Dorsolateral prefrontal cortex (tissue), 120 donors: ENCODE measurements at regions of chr7 and their contacts with region 1.

Region 1: GRCh38 chr7:7681179-7681935 is 37.0 kb downstream of the RPA3 start:
- DNase-seq: peak in 2 of 10 donors; percentile 45 to 51
- H3K4me3 ChIP-seq: peak overlapping the region in 52 of 59 donors; percentile 6 to 59 (median 34)
- H3K27ac ChIP-seq: peak overlapping the region in 58 of 59 donors; percentile 30 to 88 (median 74)
- H3K27me3 ChIP-seq: no peaks in the 10 kb centered on the region
- CTCF ChIP-seq: peak; percentile 48 to 92 (median 80)

Region 2: DNA sequence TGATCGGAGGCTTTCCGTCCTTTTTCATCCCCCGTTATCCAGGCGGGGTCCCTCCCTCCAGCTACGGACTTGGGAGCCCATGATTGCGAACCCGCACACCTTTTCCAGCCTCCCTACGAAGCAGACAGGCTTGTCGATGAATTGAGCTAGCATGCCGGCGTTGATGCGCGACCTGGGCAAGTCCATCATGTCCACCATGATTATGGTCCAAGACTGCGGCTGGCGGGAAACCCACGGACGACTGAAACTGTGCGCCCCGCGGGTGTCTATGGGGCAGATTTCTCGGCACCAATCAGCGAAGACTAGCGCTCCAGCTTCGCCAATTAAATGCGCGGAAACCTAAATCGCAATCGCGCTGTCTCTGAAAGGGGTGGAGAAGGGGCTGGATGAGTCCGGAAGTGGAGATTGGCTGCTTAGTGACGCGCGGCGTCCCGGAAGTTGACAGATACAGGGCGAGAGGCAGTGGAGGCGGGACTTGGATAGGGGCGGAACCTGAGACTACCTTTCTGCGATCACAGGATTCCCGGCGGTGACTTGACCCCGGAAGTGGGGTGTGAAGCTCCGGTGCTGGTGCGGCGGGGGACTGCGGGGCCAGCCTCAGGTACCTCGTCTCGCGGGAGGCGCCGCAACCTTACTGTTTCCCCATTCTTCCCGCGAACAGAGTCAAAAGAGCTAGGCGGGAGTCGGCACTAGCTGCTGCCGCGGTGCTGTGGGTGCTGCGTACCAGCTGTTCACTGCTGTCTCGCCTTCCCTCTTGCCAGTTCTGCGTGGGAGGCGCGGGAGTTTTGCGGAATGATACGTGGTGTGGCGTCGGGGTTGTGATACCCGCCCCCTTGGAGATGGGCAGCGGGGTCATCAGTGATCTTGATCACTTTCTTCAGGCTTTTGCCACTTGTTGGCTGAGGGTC is 40.9 kb before region 1 on chr7 and contains the start of gene UMAD1:
- intact Hi-C with region 1: loop called in 1 of 2 experiments (anchors 2 kb)
- DNase-seq: peak; percentile 98 to 100 (median 99)
- H3K4me3 ChIP-seq: peak within 1 kb of the TSS; percentile 68 to 99 (median 89)
- H3K27ac ChIP-seq: peak within 1 kb of the TSS in 58 of 59 donors; percentile 52 to 94 (median 84)
- H3K27me3 ChIP-seq: no peaks in the 10 kb centered on the region
- CTCF ChIP-seq: peak in 19 of 56 donors; percentile 7 to 44 (median 26)
- total RNA-seq, gene UMAD1: 12.6 to 25.1 (median 18.8) TPM

Region 3: DNA sequence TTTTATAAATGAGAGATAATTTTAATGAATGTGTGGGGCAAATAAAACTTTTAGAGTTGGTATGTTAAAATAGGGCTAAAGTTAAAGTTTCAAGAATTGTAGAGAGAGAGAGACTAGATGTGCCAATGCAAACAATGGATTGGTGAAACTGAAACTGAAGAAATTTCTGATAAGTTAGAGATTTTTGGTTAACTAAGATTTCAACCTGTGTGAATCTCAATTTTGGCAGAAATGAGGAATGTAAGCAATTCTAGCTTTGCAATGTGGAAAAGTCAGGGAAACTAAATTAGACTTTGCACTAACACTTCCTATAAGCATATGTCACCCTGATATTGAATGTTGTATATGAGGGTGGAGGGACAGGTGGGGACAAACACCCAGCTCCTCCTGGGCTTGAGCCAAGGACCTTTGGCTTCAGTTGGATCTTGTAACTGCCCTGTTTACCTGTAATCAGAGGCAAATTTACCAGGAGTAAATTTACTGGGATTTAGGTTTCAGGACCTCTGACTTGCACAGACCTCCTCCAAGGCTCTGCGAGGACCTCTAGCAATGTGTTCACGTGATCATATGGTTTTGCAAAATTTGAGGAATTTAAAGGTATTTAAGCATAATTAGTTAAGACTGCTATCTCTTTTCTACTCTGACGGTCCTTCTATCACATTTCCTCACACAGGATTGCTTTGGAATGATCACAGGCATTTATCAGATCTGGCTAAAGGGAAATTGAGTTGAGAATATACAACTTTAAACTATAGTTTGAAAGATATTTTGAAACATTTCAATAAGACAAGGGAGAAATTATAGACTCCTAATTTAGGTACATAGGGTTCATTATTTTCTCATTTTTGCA is 70.1 kb after region 1 on chr7:
- intact Hi-C with region 1: loop called in 1 of 2 experiments (anchors 10 kb)
- DNase-seq: no peak
- H3K4me3 ChIP-seq: no peak overlapping the region
- H3K27ac ChIP-seq: no peak overlapping the region
- H3K27me3 ChIP-seq: no peaks in the 10 kb centered on the region
- CTCF ChIP-seq: no peak

Region 4: DNA sequence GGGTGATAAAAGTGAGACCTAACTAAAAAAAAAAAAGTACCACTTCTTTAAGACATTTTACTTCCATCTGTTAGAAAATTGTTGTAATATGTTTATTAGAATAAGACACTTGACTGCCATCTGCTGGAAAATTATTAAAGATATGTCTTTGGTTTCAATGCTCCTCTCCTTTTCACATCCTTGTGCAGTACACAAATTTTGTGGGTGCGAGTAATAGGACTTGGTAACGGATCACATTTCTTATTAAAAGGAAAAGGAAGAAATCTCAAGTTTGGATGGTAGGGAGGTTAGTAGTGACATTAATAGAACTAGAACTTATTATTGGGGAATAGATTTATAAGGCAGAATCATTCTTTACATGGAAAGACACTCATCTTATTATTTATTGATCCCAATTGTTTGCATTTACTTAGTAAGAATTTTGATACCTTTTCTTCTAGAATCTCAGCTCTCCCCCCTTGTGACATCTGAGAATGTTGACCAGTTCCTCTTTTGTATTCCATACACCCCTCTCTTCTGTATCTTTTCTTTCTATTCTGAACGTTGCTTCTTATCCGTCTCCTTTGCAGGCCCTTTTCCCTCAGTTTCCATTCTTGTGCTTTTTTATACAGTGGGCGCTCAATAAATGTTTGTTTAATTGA is 80.1 kb after region 1 on chr7:
- intact Hi-C with region 1: loop called (anchors 5 to 10 kb)
- DNase-seq: no peak
- H3K4me3 ChIP-seq: peak overlapping the region in 50 of 59 donors; percentile 0 to 57 (median 32)
- H3K27ac ChIP-seq: peak overlapping the region in 12 of 59 donors; percentile 2 to 72 (median 52)
- H3K27me3 ChIP-seq: no peaks in the 10 kb centered on the region
- CTCF ChIP-seq: peak in 55 of 56 donors; percentile 22 to 69 (median 48)

Region 5: DNA sequence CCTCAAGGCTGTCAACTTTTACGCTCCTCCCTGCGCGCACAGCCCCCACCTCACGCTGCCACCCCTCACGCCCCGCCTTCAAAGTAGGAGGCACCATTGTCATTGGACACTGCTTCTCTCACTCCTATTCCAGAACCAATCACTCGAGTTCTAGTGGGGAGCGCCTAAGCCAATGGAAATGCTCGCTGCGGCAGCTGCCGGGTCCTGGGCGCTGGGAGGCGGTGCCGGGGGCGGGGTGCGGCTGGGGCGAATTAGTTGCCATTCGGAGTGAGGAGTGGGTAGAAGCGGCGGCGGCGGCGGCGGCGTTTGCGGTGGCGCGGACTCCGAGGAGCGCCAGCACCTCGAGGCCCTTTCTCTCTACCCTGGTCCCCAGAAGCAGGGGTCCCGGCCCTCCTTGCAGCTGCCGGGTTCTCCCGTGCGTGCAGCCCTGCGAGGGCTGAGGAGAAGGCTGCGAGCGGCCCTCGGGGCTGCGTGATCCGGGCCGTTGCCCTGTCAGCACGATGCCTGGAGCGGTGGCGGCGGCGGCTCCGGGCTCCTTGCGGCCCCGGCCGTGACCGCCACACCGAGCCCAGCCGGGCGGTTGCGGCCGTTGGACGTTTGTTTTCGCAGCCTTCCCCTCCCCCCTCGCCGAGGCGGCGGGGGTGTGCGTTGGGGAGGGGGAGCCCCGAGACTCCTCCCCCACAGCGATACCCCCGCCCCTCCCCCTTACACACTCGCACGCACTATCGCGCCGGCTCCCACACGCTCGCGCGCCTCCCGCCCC is 287.4 kb after region 1 on chr7 and contains the start of gene GLCCI1:
- intact Hi-C with region 1: loop called in 1 of 2 experiments (anchors 5 kb)
- DNase-seq: peak; percentile 94 to 99 (median 98)
- H3K4me3 ChIP-seq: peak within 1 kb of the TSS; percentile 77 to 100 (median 96)
- H3K27ac ChIP-seq: peak within 1 kb of the TSS; percentile 90 to 100 (median 100)
- H3K27me3 ChIP-seq: no peaks in the 10 kb centered on the region
- CTCF ChIP-seq: peak in 14 of 56 donors; percentile 9 to 41 (median 19)
- total RNA-seq, gene GLCCI1: 61.6 to 198 (median 112) TPM

Region 6: DNA sequence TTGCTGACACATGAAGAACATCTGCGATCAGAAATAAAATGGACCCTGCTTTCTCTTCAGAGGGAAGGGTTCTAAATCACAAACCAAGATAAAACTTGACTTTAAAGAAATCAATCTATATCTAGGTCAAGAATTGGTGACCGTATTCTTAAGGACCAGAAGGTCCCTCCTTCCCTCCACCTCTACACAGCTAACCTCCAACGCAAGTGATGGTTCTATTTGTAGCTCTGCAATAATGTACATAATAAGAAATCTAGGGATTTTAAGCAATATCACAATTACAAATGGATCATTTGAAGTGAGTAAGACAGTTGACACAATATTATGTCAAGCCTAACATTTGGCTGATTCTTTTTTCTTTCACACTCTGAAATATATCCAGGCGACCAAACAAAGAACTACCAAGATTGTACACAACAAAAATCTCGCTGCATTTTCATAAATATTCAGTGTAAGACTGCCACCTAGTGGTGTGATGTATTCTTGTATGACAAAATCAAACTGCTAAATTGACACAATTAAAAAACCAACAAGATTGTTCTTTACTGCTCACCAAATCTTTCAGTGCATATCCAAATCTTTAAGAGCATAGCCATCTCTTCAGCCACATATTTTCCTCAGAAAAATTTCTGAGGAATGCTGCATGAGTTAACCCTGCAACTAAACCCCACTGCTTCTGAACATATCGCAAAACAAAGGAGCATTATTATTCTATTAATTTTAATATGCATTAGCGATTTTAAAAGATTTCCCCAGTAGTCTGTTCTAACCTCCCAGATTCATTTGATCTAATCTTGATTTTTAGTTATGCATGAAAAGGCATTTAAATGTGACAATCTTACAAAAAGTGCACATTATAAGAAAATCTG is 536.1 kb after region 1 on chr7:
- intact Hi-C with region 1: loop called (anchors 5 to 10 kb)
- DNase-seq: no peak
- H3K4me3 ChIP-seq: peak overlapping the region in 27 of 59 donors; percentile 1 to 41 (median 16)
- H3K27ac ChIP-seq: peak overlapping the region in 29 of 59 donors; percentile 2 to 79 (median 34)
- H3K27me3 ChIP-seq: no peaks in the 10 kb centered on the region
- CTCF ChIP-seq: peak; percentile 77 to 100 (median 89)